ENCODE measurements at regions of chr17 and their contacts with region 1.

Region 1: GRCh38 chr17:41648411-41649195 is 24.2 kb upstream of the KRT17 start:
- DNase-seq: peak; percentile 92 to 93
- ATAC-seq: peak; percentile 84 to 94
- H3K4me3 ChIP-seq: peak overlapping the region; percentile 48
- H3K27ac ChIP-seq: peak overlapping the region; percentile 85 to 89
- H3K4me1 ChIP-seq: peaks cover 40% of the 10 kb centered on the region
- CTCF ChIP-seq: peak; percentile 93
- EP300 ChIP-seq: no peak
- POLR2A ChIP-seq: peak; percentile 38
- RAD21 ChIP-seq: peak; percentile 66 to 69

Region 2: DNA sequence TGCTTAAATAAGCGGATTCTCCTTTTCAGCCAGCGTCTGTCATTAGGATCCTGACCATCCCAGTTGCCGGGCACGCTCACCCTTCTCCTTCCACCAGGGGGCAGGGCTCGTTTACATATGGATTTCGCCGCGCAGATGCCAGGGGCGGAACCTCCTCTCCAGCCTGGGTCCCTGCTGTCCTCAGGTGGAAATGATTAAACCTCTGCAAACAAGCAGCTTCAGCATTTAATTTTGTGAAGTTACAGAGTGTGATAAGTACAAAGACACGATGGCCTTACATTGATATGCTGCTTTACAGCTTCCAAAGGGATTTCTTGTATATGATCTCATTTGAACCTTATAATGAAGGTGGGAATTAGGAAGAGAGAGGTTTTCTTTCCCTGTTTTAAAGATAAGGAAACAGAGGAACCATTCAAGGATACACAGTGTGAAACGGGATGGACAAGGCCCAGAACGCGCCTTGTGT is 845.0 kb before region 1 on chr17:
- CTCF ChIA-PET with region 1: interaction called, 47 read pairs
- POLR2A ChIA-PET with region 1: no interaction called
- DNase-seq: peak; percentile 88 to 96
- ATAC-seq: peak; percentile 99
- H3K4me3 ChIP-seq: no peak overlapping the region
- H3K27ac ChIP-seq: peak overlapping the region; percentile 27 to 56; a peak in 4 of 6 replicates
- H3K4me1 ChIP-seq: peaks cover 7% of the 10 kb centered on the region
- CTCF ChIP-seq: peak; percentile 98
- EP300 ChIP-seq: no peak
- POLR2A ChIP-seq: no peak
- RAD21 ChIP-seq: peak; percentile 100

Region 3: GRCh38 chr17:40909351-40909750 is 739.3 kb before region 1 on chr17:
- CTCF ChIA-PET with region 1: interaction called, 107 read pairs
- POLR2A ChIA-PET with region 1: interaction called, 9 read pairs
- DNase-seq: peak; percentile 91 to 92
- ATAC-seq: peak; percentile 91 to 95
- H3K4me3 ChIP-seq: no peak overlapping the region
- H3K27ac ChIP-seq: peak overlapping the region; percentile 62 to 65
- H3K4me1 ChIP-seq: peaks cover 31% of the 10 kb centered on the region
- CTCF ChIP-seq: peak; percentile 98
- EP300 ChIP-seq: no peak
- POLR2A ChIP-seq: no peak
- RAD21 ChIP-seq: peak; percentile 99 to 100

Region 4: GRCh38 chr17:41457676-41458075 is 190.9 kb before region 1 on chr17:
- CTCF ChIA-PET with region 1: interaction called, 20 read pairs
- POLR2A ChIA-PET with region 1: no interaction called
- DNase-seq: no peak
- ATAC-seq: no peak
- H3K4me3 ChIP-seq: no peak overlapping the region
- H3K27ac ChIP-seq: no peak overlapping the region
- H3K4me1 ChIP-seq: no peaks in the 10 kb centered on the region
- CTCF ChIP-seq: no peak
- EP300 ChIP-seq: no peak
- POLR2A ChIP-seq: no peak
- RAD21 ChIP-seq: no peak

Region 5: DNA sequence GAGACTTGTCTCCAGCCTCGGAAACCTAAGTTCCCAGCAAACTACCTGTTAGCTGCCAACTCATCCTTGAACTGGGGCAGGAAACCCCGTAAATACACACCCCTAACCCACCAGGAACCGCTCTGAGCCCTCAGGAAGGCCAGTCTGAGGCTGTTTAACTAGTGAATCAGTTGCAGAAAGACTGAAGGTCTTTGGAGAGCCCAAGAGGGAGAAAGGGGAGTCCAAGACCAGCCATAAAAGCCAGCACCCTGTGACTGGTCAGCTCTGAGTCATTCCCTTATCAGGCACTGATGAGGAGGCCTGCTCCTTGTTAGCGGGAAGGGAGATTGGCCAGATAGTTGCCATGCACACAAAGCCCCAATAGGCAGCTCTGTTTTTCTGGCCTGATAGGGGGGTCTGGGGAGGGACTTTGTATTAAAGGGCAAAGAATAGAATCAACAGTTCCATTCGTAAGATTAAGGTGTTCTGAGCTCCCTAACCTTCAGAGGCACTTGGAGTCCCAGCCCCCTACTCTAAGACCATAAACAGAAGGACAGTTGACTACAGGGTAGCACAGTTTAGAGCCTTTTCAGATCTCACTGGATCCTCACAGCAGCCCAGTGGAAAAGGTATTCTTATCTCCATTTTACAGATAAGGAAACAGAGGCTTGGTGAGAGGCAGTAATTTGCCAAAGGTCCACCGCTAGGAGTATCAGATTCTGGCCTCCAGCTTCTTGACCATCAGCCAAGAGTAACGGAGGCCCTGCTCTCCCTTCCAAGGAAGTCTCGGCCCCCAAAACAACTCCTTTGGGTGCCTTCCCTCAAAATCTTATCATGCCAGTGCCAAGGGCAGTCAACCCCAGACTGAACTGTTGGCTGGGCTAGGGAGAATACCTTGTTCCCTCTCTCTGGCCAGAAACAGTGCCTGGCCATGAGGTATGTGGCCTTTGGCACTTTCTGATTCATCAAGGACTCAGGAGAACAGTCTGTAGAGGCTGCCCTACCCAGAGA is 118.2 kb before region 1 on chr17:
- CTCF ChIA-PET with region 1: interaction called, 17 read pairs
- POLR2A ChIA-PET with region 1: no interaction called
- DNase-seq: peak; percentile 85 to 89
- ATAC-seq: peak; percentile 82 to 95
- H3K4me3 ChIP-seq: no peak overlapping the region
- H3K27ac ChIP-seq: peak overlapping the region; percentile 59 to 83
- H3K4me1 ChIP-seq: peaks cover 29% of the 10 kb centered on the region
- CTCF ChIP-seq: no peak
- EP300 ChIP-seq: no peak
- POLR2A ChIP-seq: no peak; the same call in 1 of the 2 replicates
- RAD21 ChIP-seq: no peak

Region 6: DNA sequence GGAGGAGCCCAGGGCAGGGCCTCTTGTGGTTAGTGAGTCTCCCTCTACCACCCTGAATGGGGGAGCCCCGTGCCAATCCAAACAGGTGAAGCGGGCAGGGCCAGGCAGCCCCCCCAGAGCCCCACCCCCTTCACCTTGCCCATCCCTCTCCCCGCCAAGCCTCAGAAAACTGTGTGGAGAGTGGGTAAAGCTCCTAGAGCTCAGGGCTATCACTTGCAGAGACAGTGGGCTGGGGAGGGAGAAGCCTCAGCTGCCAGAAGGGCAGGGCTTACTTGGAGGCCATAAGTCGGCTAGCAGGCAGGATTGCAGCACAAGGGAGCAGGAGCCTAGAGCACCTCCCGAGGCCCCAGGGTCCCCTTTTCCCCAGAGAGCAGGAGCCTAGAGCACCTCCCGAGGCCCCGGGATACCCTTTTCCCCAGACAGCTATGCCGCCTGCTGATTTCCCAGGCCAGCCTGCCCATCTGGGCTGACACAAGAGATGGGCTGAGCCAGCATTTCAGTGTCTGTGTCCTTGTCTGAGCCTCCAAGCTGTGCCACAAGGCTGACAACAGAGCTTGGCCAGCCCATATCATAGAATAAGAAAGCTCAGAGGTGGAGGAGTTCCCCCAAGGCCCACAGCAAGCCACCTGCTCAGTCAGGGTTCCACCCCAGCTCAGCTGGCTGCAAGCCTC is 55.2 kb before region 1 on chr17:
- CTCF ChIA-PET with region 1: interaction called, 15 read pairs
- POLR2A ChIA-PET with region 1: no interaction called
- DNase-seq: no peak
- ATAC-seq: peak in 1 of 2 experiments; percentile 27; a peak in 2 of 6 replicates
- H3K4me3 ChIP-seq: no peak overlapping the region
- H3K27ac ChIP-seq: no peak overlapping the region
- H3K4me1 ChIP-seq: no peaks in the 10 kb centered on the region
- CTCF ChIP-seq: no peak
- EP300 ChIP-seq: no peak
- POLR2A ChIP-seq: no peak
- RAD21 ChIP-seq: no peak

Region 7: GRCh38 chr17:41635121-41636097 is 13.2 kb before region 1 on chr17:
- CTCF ChIA-PET with region 1: interaction called, 56 read pairs
- POLR2A ChIA-PET with region 1: no interaction called
- DNase-seq: no peak
- ATAC-seq: peak; percentile 27 to 47; a peak in 3 of 6 replicates
- H3K4me3 ChIP-seq: no peak overlapping the region
- H3K27ac ChIP-seq: no peak overlapping the region
- H3K4me1 ChIP-seq: no peaks in the 10 kb centered on the region
- CTCF ChIP-seq: no peak
- EP300 ChIP-seq: no peak
- POLR2A ChIP-seq: no peak
- RAD21 ChIP-seq: no peak

Region 8: DNA sequence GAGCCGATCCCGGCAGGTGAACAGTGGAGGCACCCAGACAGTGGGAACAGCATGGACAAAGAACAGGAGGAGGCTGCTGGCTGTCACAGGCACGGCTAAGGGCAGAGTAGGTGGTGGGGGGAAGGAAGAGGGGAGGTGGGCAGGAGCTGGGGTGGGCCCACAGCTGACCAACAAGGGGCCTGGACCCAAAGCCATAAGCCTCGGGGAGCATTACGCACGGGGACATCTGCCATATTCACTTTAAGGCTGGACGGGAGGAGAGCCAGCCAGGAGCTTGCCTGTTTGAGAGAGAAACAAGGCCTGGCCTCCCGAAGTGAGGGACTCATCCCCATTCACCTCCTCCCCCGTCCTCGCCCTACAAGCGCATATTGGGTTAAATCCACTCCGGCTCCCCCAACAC is 105.5 kb after region 1 on chr17:
- CTCF ChIA-PET with region 1: no interaction called
- POLR2A ChIA-PET with region 1: no interaction called
- DNase-seq: no peak
- ATAC-seq: no peak
- H3K4me3 ChIP-seq: no peak overlapping the region
- H3K27ac ChIP-seq: no peak overlapping the region
- H3K4me1 ChIP-seq: no peaks in the 10 kb centered on the region
- CTCF ChIP-seq: no peak
- EP300 ChIP-seq: no peak
- POLR2A ChIP-seq: no peak
- RAD21 ChIP-seq: no peak

Measured in A549 (cell line).